Sigmoid colon (tissue), 7 donors: ENCODE measurements at regions of chr2 and their contacts with region 1.

Region 1: DNA sequence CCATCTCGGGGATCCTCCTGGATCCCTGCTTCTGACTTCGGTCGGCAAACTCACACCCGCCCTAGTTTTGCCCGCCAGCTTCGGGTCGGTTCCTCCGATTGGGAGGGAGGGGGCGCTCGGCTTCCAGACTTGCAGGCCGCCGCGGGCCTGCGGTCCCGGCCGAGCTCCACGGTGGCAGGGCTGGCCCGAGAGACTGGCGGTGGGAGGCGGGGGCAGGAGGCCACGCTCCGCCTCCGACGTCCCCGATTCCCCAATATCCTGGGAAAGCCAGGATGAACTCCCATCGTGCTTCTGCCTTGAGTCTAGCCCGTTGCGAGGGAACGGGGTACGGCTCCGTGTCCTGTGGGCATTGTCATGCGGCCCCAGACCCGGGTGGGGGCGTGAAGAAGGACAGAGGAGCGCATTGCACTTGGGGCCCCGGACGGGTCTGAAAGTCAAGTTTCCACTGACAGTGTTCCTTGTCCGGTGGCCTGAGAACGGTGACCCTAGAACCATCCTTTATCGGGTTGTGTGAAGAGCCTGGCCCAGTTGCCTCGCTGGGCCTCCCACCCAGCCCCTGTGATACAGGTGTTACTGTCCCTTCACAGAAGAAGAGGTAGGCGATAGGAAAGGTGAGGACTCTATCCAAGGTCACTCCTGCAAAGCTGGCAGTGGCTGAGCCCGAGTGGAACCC is 2.4 kb upstream of the INHBB start:
- DNase-seq: peak; percentile 88
- H3K4me3 ChIP-seq: peak overlapping the region in 2 of 4 donors; percentile 5 to 55
- H3K27ac ChIP-seq: peak overlapping the region in 1 of 4 donors; percentile 51
- H3K4me1 ChIP-seq: peaks cover 0 to 46% (median 43%) of the 10 kb centered on the region in 4 donors
- H3K27me3 ChIP-seq: peaks cover 50 to 94% (median 77%) of the 10 kb centered on the region in 3 donors
- CTCF ChIP-seq: peak; percentile 54 to 74 (median 64)
- EP300 ChIP-seq: no peak
- POLR2A ChIP-seq: no peak

Region 2: DNA sequence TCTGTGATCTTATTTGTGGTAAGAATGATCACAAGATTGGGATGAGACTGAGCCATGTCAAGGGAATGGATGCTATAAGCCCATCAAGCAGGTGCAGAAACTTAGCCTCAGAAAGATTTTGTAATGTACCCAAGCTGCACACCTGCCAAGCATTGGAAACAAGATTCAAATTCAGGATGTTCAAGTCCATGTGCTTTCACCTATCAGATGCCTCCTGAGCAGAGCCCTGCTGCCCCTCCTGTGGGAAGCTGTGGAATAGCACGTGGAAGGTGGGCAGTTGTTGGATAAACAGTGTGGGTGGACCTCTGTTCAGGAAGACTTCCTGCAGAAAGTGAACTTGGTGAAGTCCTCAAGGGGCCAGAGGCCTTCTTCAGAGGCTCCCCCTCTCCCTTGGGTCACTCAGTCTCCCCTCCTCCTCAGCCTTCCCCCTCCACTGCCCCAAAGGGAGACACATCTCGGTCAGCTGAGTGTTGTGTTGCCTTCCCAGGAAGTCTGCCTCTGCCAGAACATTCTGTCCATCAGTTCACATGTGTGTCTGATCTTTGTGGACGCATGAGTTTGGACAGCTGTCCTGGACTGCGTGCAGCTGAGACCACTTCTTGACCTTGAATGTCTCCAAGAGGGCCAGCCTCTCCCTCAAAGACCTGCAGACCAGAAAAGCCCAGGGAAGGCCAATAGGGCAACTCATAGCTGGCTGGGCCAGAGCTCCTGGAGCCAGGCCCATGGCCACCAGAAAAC is 188.5 kb after region 1 on chr2:
- intact Hi-C with region 1: no loop called
- DNase-seq: peak; percentile 55
- H3K4me3 ChIP-seq: no peak overlapping the region
- H3K27ac ChIP-seq: no peak overlapping the region
- H3K4me1 ChIP-seq: no peaks in the 10 kb centered on the region
- H3K27me3 ChIP-seq: no peaks in the 10 kb centered on the region
- CTCF ChIP-seq: no peak
- EP300 ChIP-seq: no peak
- POLR2A ChIP-seq: no peak

Region 3: DNA sequence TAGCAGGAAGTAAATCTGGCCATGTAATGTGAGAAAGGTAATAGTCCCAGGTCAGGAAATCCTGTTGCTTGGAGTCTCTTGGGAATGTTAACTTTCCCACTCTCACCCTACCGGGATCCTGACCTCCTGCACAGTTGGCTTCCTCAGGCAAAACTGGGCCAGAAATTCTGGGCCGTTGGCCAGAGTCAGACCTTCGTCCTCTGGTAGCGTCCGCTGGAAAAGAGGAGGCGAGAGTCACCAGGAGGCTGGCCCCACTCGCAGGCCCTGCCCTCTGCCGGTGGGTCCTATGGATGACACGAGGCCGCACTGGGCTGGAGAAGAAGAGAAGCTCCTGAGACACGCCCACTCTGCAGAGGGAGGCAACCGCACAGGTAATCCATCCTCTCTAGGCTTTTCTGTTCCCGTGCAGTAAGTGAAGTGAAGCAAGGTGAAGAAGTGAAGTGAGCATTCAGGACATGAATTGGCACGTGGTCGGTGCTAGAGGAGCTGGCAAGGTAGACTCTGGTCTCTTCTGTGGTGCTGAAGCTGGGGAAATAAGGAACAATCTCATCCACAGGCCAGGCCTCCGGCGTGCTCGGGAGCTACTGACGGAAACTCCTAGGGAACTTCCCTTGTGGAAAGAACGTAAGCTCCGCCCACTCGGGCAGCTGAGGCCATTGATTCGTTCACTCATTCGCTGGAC is 209.4 kb after region 1 on chr2:
- intact Hi-C with region 1: loop called (anchors 2 kb)
- DNase-seq: peak; percentile 85
- H3K4me3 ChIP-seq: no peak overlapping the region
- H3K27ac ChIP-seq: peak overlapping the region in 1 of 4 donors; percentile 55
- H3K4me1 ChIP-seq: peaks cover 0 to 25% (median 19%) of the 10 kb centered on the region in 4 donors
- H3K27me3 ChIP-seq: no peaks in the 10 kb centered on the region
- CTCF ChIP-seq: peak; percentile 6 to 48 (median 36)
- EP300 ChIP-seq: no peak
- POLR2A ChIP-seq: no peak

Region 4: DNA sequence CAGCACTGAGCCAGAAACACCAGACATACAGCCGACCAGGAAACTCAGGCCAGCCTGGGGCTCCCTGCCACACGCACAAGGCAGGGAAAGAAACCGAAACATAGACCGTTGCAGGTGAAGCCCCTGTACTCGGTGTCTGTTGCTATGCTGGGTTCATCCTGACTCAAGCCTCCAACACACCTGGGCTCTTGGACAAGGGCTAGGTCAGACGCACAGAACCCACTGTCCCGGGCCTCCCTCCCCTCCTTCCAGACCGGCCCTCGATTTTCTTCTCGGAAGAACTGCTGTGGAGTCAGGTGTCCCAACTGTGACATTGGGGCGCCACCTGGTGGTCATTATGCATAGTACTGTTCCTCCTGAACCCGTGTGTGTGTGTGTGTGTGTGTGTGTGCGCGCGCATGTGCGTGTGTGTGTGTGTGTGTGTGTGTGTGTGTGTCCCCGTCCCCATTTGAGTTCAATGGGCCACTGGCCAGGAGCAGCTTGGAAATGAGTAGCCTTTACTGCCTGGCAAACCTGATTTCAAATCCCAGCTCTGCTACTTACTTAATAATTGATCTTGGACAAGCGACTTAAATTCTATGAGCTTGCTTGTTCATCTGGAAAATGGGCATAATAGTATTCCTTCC is 336.7 kb after region 1 on chr2:
- intact Hi-C with region 1: loop called (anchors 1 kb)
- DNase-seq: peak; percentile 90
- H3K4me3 ChIP-seq: no peak overlapping the region
- H3K27ac ChIP-seq: no peak overlapping the region
- H3K4me1 ChIP-seq: peaks cover 0 to 27% (median 24%) of the 10 kb centered on the region in 4 donors
- H3K27me3 ChIP-seq: peaks cover 0 to 11% (median under 1%) of the 10 kb centered on the region in 3 donors
- CTCF ChIP-seq: peak; percentile 52 to 89 (median 81)
- EP300 ChIP-seq: no peak
- POLR2A ChIP-seq: no peak

Region 5: GRCh38 chr2:121076885-121077549 is 733.4 kb after region 1 on chr2:
- intact Hi-C with region 1: loop called (anchors 10 kb)
- DNase-seq: no peak
- H3K4me3 ChIP-seq: no peak overlapping the region
- H3K27ac ChIP-seq: no peak overlapping the region
- H3K4me1 ChIP-seq: peaks cover 0 to 41% (median 29%) of the 10 kb centered on the region in 4 donors
- H3K27me3 ChIP-seq: peaks cover 0 to 7% (median 0%) of the 10 kb centered on the region in 3 donors
- CTCF ChIP-seq: peak in 3 of 4 experiments; percentile 55 to 78 (median 66)
- EP300 ChIP-seq: no peak
- POLR2A ChIP-seq: no peak